ENCODE measurements at regions of chr9 and their contacts with region 1.

Region 1: DNA sequence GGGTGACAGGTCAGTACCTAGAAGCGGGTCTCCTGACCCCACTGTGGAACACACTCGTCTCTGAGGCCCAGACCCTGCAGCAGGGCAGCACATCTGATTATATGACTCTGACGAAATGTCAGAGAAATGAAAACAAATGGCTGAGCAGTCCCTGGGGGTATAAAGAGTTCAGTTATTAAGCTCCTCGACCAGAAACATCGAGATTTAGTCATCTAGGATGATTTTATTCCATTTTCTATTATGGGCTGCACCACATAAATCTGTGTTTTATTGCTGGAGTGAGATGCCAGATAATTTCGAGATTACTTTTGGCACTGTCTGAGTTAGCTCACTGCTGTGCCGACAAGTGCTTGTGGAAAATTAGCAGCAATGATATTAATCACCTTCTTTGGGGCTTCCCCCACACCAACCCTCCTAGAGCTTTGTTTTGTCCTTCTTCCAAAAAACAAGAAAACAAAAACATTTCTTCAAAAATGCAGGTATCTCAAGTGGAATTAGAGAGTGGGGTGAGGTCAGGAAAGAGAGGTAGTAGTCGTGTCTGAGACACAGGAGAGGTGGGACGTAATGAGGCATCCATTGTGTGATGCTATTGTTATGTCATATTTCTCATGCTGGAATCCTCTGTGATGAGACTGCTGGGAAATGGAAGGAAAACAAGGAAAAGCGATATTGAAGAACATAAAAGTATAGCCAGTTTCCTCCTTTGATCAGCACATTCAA is 495.5 kb downstream of the DMAC1 start:
- DNase-seq: no peak
- H3K4me3 Mint-ChIP-seq: no peak overlapping the region
- H3K27ac Mint-ChIP-seq: no peak overlapping the region
- H3K4me1 Mint-ChIP-seq: no peaks in the 10 kb centered on the region
- H3K27me3 Mint-ChIP-seq: peaks cover 50% of the 10 kb centered on the region
- CTCF ChIP-seq: no peak

Region 2: GRCh38 chr9:6855860-6856259 is 448.2 kb before region 1 on chr9:
- CTCF ChIA-PET with region 1: interaction called, 10 read pairs
- intact Hi-C with region 1: no loop called
- DNase-seq: peak; percentile 18
- H3K4me3 Mint-ChIP-seq: no peak overlapping the region
- H3K27ac Mint-ChIP-seq: no peak overlapping the region
- H3K4me1 Mint-ChIP-seq: peaks cover 12% of the 10 kb centered on the region
- H3K27me3 Mint-ChIP-seq: no peaks in the 10 kb centered on the region
- CTCF ChIP-seq: no peak

Region 3: DNA sequence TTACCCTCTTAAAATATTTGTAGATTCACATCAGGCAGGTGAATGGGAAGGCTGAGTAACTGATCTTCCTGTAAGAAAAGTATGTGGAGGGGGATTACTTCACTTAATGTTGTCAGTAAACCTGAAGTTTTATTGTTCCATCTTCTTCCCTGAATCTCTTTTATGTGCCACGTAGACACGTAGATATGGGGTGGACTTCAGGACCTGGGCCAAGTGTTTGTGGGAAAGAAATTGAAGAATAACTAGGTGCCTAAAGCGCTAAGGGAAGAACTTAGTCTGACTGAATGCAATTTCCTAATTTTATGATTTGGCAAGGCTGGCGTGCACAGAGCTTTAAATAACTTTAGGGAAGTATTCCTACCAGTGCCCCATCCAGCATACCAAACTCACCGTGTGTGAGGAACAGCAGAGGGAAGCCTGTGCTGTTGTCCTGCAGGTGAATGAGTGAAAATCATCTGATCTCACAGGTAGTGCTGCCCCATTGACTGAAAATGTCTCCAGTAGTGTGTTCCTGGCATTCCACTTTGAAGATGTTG is 222.9 kb before region 1 on chr9:
- CTCF ChIA-PET with region 1: no interaction called
- intact Hi-C with region 1: no loop called
- DNase-seq: no peak
- H3K4me3 Mint-ChIP-seq: no peak overlapping the region
- H3K27ac Mint-ChIP-seq: no peak overlapping the region
- H3K4me1 Mint-ChIP-seq: no peaks in the 10 kb centered on the region
- H3K27me3 Mint-ChIP-seq: no peaks in the 10 kb centered on the region
- CTCF ChIP-seq: no peak

Region 4: GRCh38 chr9:7246917-7247522 is 57.0 kb before region 1 on chr9:
- CTCF ChIA-PET with region 1: no interaction called
- intact Hi-C with region 1: no loop called
- DNase-seq: no peak
- H3K4me3 Mint-ChIP-seq: no peak overlapping the region
- H3K27ac Mint-ChIP-seq: no peak overlapping the region
- H3K4me1 Mint-ChIP-seq: no peaks in the 10 kb centered on the region
- H3K27me3 Mint-ChIP-seq: peaks cover 30% of the 10 kb centered on the region
- CTCF ChIP-seq: no peak